Activated CD4-positive, alpha-beta memory T cell treated with anti-CD3 and anti-CD28 coated beads, Interleukin-2, amount 10 ng/mL, durations not matched to agents 7 days and 5 days (primary cell): ENCODE measurements at regions of chr7 and their contacts with region 1.

Region 1: GRCh38 chr7:2886900-2887299 is 42.8 kb upstream of the GNA12 start:
- DNase-seq: peak; percentile 61
- H3K4me3 Mint-ChIP-seq: no peak overlapping the region
- H3K27ac Mint-ChIP-seq: no peak overlapping the region
- H3K4me1 Mint-ChIP-seq: peaks cover 3% of the 10 kb centered on the region
- H3K27me3 Mint-ChIP-seq: peaks cover 4% of the 10 kb centered on the region

Region 2: GRCh38 chr7:2903682-2904162 is 16.8 kb after region 1 on chr7:
- CTCF ChIA-PET with region 1: interaction called, 11 read pairs
- POLR2A ChIA-PET with region 1: no interaction called
- DNase-seq: no peak
- H3K4me3 Mint-ChIP-seq: no peak overlapping the region
- H3K27ac Mint-ChIP-seq: peak overlapping the region; percentile 55
- H3K4me1 Mint-ChIP-seq: peaks cover 29% of the 10 kb centered on the region
- H3K27me3 Mint-ChIP-seq: no peaks in the 10 kb centered on the region